Kidney (tissue), 22 donors: ENCODE measurements at regions of chr15 and their contacts with region 1.

Region 1: GRCh38 chr15:26481338-26481737 is 291.5 kb downstream of the GABRB3 start:
- DNase-seq: no peak
- H3K4me3 ChIP-seq: no peak overlapping the region
- H3K27ac ChIP-seq: no peak overlapping the region
- H3K4me1 ChIP-seq: no peaks in the 10 kb centered on the region
- H3K27me3 ChIP-seq: no peaks in the 10 kb centered on the region
- CTCF ChIP-seq: no peak

Region 2: GRCh38 chr15:26537663-26538062 is 56.3 kb after region 1 on chr15:
- intact Hi-C with region 1: loop called (anchors 10 kb)
- DNase-seq: no peak
- H3K4me3 ChIP-seq: no peak overlapping the region
- H3K27ac ChIP-seq: no peak overlapping the region
- H3K4me1 ChIP-seq: no peaks in the 10 kb centered on the region
- H3K27me3 ChIP-seq: no peaks in the 10 kb centered on the region
- CTCF ChIP-seq: no peak